Prostate gland (tissue), 2 donors: ENCODE measurements at regions of chr5 and their contacts with region 1.

Region 1: GRCh38 chr5:151239237-151239861 is 13.6 kb upstream of the GM2A start:
- DNase-seq: no peak
- H3K4me3 ChIP-seq: no peak overlapping the region
- H3K27ac ChIP-seq: no peak overlapping the region
- H3K4me1 ChIP-seq: peaks cover 3% of the 10 kb centered on the region
- H3K27me3 ChIP-seq: no peaks in the 10 kb centered on the region
- CTCF ChIP-seq: peak; percentile 14 to 59 (median 51)
- POLR2A ChIP-seq: no peak

Region 2: GRCh38 chr5:150609843-150610584 is 629.3 kb before region 1 on chr5:
- intact Hi-C with region 1: no loop called
- DNase-seq: no peak
- H3K4me3 ChIP-seq: no peak overlapping the region
- H3K27ac ChIP-seq: peak overlapping the region; percentile 24 to 58
- H3K4me1 ChIP-seq: no peaks in the 10 kb centered on the region
- H3K27me3 ChIP-seq: no peaks in the 10 kb centered on the region
- CTCF ChIP-seq: no peak
- POLR2A ChIP-seq: no peak

Region 3: DNA sequence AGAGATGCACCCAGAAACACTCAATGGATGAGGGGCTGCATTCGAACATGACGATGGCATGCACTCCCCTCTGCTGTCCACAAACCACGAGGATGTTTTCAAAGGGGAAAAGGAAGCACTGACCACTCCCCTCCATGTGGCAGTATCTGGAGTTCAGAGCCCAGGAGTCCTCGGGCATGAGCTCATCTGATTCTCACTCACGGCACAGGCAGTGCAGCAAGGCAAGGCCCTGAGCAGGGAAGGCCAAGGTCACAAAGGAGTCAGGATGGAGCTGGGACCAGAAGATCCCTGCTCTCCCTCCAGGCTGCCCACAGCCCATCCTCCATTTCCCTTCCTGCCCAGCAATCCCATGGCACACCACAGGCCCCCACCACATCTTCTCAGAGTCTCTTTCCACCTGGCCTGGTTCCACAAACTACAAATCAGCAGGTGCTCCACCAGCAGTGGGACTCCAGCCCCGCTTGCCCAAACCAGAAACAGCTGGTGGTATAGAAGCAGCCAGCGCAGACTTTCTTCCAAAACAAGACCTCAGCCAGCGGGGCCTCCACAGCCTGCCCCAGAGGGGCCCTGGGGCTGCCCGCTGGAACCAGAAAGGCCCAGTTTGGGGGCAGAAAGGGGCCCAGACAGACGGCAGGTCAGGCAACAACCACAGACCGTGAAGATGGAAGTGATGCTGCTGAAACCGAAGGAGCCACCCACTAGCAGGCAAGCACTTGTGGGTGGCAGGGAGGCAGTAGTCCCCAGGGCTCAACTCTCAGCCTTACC is 170.7 kb before region 1 on chr5:
- intact Hi-C with region 1: loop called (anchors 10 kb)
- DNase-seq: no peak
- H3K4me3 ChIP-seq: no peak overlapping the region
- H3K27ac ChIP-seq: peak overlapping the region; percentile 28 to 36
- H3K4me1 ChIP-seq: no peaks in the 10 kb centered on the region
- H3K27me3 ChIP-seq: no peaks in the 10 kb centered on the region
- CTCF ChIP-seq: no peak
- POLR2A ChIP-seq: no peak

Region 4: GRCh38 chr5:151126199-151126645 is 113.1 kb before region 1 on chr5:
- intact Hi-C with region 1: loop called (anchors 5 kb)
- DNase-seq: peak; percentile 52
- H3K4me3 ChIP-seq: no peak overlapping the region
- H3K27ac ChIP-seq: no peak overlapping the region
- H3K4me1 ChIP-seq: no peaks in the 10 kb centered on the region
- H3K27me3 ChIP-seq: no peaks in the 10 kb centered on the region
- CTCF ChIP-seq: peak; percentile 42 to 87 (median 79)
- POLR2A ChIP-seq: no peak